ENCODE measurements at regions of chr7 and their contacts with region 1.

Region 1: DNA sequence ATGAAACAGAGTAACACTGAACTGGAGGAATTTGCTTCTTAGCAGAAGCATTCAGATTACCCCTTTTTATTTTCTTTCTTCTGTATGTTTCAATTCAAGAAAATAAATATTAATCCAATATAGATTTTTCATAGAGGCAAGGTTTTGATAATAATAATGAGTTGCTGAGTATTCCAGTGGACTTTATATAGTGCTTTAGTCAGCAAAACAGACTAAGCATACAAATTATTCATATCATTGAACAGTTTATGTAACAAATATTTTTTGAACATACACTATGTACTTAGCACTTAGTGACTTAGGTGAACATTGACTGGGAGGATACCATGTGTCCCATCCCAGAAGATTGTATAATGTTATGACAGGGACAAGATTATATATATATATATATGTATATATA is 32.0 kb downstream of the PPP1R9A start:
- DNase-seq: no peak
- H3K4me3 ChIP-seq: no peak overlapping the region
- H3K27ac ChIP-seq: no peak overlapping the region
- H3K4me1 ChIP-seq: no peaks in the 10 kb centered on the region
- H3K27me3 ChIP-seq: no peaks in the 10 kb centered on the region
- CTCF ChIP-seq: no peak
- POLR2A ChIP-seq: no peak

Region 2: GRCh38 chr7:95749515-95749914 is 810.1 kb after region 1 on chr7:
- intact Hi-C with region 1: loop called (anchors 5 kb)
- DNase-seq: no peak
- H3K4me3 ChIP-seq: no peak overlapping the region
- H3K27ac ChIP-seq: no peak overlapping the region
- H3K4me1 ChIP-seq: no peaks in the 10 kb centered on the region
- H3K27me3 ChIP-seq: no peaks in the 10 kb centered on the region
- CTCF ChIP-seq: no peak
- POLR2A ChIP-seq: no peak

Measured in vagina (tissue), 2 donors.